ENCODE measurements at regions of chr3 and their contacts with region 1.

Region 1: DNA sequence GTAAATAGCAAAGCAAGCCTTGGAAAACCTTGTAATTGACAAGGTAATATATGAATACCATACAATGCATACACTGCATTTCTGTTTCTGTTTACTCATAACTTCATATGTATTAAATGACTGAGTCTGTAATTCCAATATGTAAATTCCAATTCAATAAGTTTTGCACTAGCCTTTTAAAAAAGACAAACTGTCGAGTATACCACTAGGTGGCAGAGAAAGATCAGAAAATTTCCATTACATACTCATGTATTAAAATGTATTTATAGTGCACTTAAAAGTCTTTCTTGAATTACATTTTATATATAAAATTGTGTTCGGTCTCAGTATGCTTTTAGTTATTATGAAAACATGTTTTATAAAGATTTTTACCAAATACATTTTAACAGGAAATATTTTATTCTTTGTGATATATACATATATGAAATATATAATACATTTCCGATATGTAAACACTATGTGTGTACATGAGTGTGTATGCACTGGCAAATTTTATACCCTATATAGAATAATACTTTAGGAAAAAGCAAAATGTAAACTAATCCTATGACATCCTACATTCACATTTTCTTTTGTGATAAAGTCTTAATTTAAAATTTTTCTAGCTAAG is 216.8 kb downstream of the VGLL3 start:
- DNase-seq: no peak

Region 2: GRCh38 chr3:86708908-86709307 is 65.3 kb before region 1 on chr3:
- intact Hi-C with region 1: no loop called
- DNase-seq: peak; percentile 57

Region 3: GRCh38 chr3:87069960-87070359 is 295.8 kb after region 1 on chr3:
- intact Hi-C with region 1: no loop called
- DNase-seq: no peak

Region 4: GRCh38 chr3:87082796-87083440 is 308.7 kb after region 1 on chr3:
- intact Hi-C with region 1: loop called (anchors 5 kb)
- DNase-seq: no peak

Region 5: DNA sequence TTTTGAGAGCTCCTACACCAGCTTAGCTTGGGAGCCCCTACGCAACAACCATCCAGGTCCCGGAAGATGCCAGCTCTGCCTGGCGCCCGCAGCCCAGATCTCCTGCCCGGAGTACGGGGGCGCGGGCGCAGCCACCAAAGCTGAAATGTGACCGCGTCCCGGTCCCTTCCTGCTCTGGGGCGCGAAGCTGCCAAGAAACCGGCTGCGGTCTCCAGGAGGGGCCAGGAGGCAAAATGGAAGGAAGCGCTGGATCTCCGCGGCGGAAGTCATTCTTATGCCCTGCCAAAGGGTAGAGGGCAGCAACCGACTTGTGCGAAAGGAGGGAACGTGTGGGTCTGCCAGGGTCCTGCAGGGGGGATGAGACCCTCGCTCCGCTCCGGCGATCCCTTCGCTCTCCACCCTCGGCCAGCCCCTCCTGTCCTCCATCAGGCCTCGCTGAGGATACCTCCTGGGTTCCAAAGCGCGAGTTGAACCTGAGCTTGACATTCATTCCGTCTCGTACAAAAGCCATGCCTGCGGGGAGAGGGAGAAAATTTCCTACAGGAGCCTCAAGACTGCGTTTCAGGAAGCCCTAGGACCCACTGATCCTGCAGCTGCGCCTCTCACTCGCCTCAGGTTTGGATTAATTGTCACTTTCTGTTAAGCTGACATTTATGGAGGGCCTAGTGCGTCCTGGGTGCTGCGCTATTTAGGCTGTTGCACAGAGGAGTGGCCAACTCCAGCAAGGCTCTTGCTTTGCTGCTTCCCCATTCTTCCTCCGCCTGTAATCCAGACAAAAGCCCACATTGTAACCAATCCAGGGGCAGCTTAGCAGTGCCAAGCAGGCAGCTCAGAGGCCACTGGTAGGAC is 315.0 kb after region 1 on chr3:
- intact Hi-C with region 1: loop called (anchors 5 kb)
- DNase-seq: peak; percentile 90

Region 6: DNA sequence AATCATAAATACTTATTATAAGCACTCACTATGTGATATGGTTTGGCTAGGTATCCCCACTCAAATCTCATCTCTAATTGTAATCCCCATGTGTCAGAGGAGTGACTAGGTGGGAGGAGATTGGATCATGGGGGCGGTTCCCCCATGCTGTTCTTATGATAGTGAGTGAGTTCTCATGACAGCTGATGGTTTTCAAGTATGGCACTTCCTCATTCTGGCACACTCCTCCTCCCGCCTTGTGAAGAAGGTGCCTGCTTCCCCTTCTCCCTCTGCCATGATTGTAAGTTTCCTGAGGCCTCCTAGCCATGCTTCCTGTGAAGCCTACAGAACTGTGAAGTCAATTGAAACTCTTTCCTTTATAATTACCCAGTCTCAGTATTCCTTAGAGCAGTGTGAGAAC is 399.6 kb after region 1 on chr3:
- intact Hi-C with region 1: loop called in 1 of 2 experiments (anchors 5 kb)
- DNase-seq: no peak

Measured in posterior vena cava (tissue), 2 donors.